ENCODE measurements at regions of chr22 and their contacts with region 1.

Region 1: DNA sequence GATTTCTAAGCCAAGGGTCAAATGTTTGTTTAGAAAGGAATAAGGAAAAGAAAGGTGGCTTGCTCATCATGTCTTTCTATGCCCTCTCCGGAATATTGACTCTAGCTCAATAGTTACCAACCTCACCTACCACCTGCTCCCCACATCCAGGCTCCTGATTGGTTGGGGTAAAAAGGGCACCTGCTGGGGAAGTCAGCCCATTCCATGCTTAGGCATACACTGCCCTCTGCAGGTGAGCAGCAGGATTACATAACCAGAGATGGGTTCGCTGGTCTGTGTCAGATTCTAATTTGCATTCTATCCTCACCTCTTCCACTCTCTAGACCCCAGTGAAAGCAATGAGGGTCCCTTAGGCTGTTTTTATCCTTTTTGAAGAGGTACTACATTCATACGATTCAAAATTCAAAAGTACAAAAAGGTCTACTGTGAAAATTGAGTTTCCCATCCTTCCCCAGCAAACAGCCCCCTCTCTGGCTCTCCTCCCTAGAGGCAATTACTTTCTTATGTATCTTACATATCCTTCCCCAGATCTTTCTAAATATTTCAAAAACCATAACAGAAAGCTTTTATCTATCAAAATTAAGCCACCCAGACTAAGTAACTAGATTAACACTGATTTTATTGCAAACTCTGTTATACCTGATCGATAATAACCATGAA is 98.0 kb upstream of the ASPHD2 start:
- DNase-seq: peak in 8 of 10 donors; percentile 41 to 81 (median 58)
- H3K4me3 ChIP-seq: no peak overlapping the region
- H3K27ac ChIP-seq: no peak overlapping the region
- H3K27me3 ChIP-seq: peaks cover 0 to 12% (median 0%) of the 10 kb centered on the region in 45 donors
- CTCF ChIP-seq: peak; percentile 71 to 97 (median 88)

Region 2: GRCh38 chr22:25465949-25466348 is 865.1 kb before region 1 on chr22:
- intact Hi-C with region 1: loop called in 1 of 2 experiments (anchors 10 kb)
- DNase-seq: no peak
- H3K4me3 ChIP-seq: no peak overlapping the region
- H3K27ac ChIP-seq: no peak overlapping the region
- H3K27me3 ChIP-seq: no peaks in the 10 kb centered on the region
- CTCF ChIP-seq: no peak

Region 3: DNA sequence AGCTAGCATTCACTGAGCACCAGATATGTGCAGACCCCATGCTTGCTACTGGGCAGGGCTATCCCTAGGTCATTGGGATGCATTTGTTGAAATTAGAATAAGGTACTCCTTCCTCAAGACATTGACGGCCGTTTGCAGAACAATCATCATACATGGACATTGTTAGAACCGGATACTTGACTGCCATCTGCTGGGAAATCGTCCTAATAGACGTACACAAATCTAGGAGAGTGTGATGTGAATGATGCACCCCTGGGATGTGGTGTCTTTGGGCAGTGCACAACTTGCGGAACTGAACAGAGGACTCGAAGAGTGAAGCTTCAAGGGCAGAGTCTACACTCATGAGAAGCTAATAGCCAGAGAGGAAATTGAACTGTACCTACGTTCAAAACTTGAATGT is 553.2 kb before region 1 on chr22:
- intact Hi-C with region 1: loop called (anchors 2 to 5 kb)
- DNase-seq: peak in 3 of 10 donors; percentile 12 to 40 (median 29)
- H3K4me3 ChIP-seq: no peak overlapping the region
- H3K27ac ChIP-seq: no peak overlapping the region
- H3K27me3 ChIP-seq: peaks cover 0 to 3% (median 0%) of the 10 kb centered on the region in 45 donors
- CTCF ChIP-seq: peak in 43 of 56 donors; percentile 4 to 57 (median 36)

Region 4: GRCh38 chr22:26086359-26086758 is 244.7 kb before region 1 on chr22:
- intact Hi-C with region 1: loop called in 1 of 2 experiments (anchors 5 kb)
- DNase-seq: no peak
- H3K4me3 ChIP-seq: no peak overlapping the region
- H3K27ac ChIP-seq: no peak overlapping the region
- H3K27me3 ChIP-seq: peaks cover 0 to 28% (median 0%) of the 10 kb centered on the region in 45 donors
- CTCF ChIP-seq: peak in 35 of 56 donors; percentile 5 to 58 (median 29)

Region 5: GRCh38 chr22:26172389-26172990 is 158.6 kb before region 1 on chr22:
- intact Hi-C with region 1: loop called (anchors 5 kb)
- DNase-seq: peak in 8 of 10 donors; percentile 39 to 81 (median 59)
- H3K4me3 ChIP-seq: peak overlapping the region in 24 of 59 donors; percentile 13 to 79 (median 70)
- H3K27ac ChIP-seq: peak overlapping the region in 2 of 59 donors; percentile 12 to 51
- H3K27me3 ChIP-seq: peaks cover 0 to 53% (median 7%) of the 10 kb centered on the region in 45 donors
- CTCF ChIP-seq: peak; percentile 17 to 76 (median 65)

Region 6: GRCh38 chr22:26393929-26394328 is 62.8 kb after region 1 on chr22:
- intact Hi-C with region 1: no loop called
- DNase-seq: no peak
- H3K4me3 ChIP-seq: no peak overlapping the region
- H3K27ac ChIP-seq: no peak overlapping the region
- H3K27me3 ChIP-seq: no peaks in the 10 kb centered on the region
- CTCF ChIP-seq: peak in 2 of 56 donors; percentile 22 to 25

Region 7: GRCh38 chr22:26573026-26573662 is 242.0 kb after region 1 on chr22:
- intact Hi-C with region 1: no loop called
- DNase-seq: no peak
- H3K4me3 ChIP-seq: no peak overlapping the region
- H3K27ac ChIP-seq: peak overlapping the region in 41 of 59 donors; percentile 6 to 70 (median 43)
- H3K27me3 ChIP-seq: no peaks in the 10 kb centered on the region
- CTCF ChIP-seq: no peak

Region 8: DNA sequence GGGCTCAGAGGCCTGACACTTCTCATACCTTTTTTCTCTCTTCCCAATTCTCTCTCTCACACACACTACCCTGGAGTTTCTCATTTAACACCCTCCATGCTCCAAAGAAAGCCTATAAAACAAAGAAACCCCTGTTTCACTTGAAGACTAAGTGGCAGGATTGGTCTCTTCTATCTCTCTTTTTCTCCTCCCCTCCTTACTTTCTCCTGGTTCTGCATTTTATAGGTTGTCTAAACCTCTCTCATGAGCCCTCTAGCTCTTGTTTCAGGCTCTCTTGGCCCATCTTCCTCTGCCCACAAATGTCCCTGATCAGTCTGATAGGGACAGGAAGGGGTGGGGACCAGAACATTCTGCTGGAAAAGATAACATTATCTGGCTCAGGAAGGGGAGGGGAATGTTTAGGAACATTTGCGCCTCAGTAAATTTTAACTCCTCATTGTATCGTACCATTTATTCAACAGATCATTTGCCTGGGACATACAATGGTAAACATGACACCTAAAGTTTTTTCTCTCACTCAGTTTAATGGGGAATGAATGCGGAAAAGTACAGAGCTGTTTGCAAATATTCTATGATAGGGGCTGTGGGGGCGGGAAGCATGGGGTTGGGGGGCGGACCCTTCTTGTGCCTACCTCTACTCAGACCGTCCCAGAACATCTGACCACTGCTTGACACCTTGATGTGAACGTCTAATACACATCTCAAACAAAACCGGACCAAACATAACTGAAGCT is 301.5 kb after region 1 on chr22:
- intact Hi-C with region 1: no loop called
- DNase-seq: no peak
- H3K4me3 ChIP-seq: no peak overlapping the region
- H3K27ac ChIP-seq: peak overlapping the region in 3 of 59 donors; percentile 18 to 48 (median 40)
- H3K27me3 ChIP-seq: no peaks in the 10 kb centered on the region
- CTCF ChIP-seq: no peak